ENCODE measurements at regions of chr5 and their contacts with region 1.

Region 1: GRCh38 chr5:111757355-111758283 is 625 bp upstream of the NREP start:
- DNase-seq: peak; percentile 39 to 89 (median 81)
- ATAC-seq: peak; percentile 81
- H3K4me3 ChIP-seq: peak overlapping the region; percentile 59 to 88
- H3K4me3 Mint-ChIP-seq: peak overlapping the region; percentile 90
- H3K27ac ChIP-seq: peak overlapping the region; percentile 51 to 74
- H3K27ac Mint-ChIP-seq: peak overlapping the region; percentile 90
- H3K4me1 ChIP-seq: peaks cover 13% of the 10 kb centered on the region
- H3K4me1 Mint-ChIP-seq: peaks cover 21% of the 10 kb centered on the region
- H3K27me3 ChIP-seq: no peaks in the 10 kb centered on the region
- H3K27me3 Mint-ChIP-seq: no peaks in the 10 kb centered on the region
- CTCF ChIP-seq: no peak

Region 2: GRCh38 chr5:111530298-111530740 is 227.3 kb before region 1 on chr5:
- CTCF ChIA-PET with region 1: interaction called, 4 read pairs
- POLR2A ChIA-PET with region 1: no interaction called
- intact Hi-C with region 1: loop called in 1 of 2 experiments (anchors 5 kb)
- DNase-seq: peak; percentile 63 to 96 (median 83)
- ATAC-seq: peak; percentile 99
- H3K4me3 ChIP-seq: no peak overlapping the region
- H3K4me3 Mint-ChIP-seq: peak overlapping the region; percentile 21
- H3K27ac ChIP-seq: peak overlapping the region; percentile 26 to 81
- H3K27ac Mint-ChIP-seq: peak overlapping the region; percentile 83
- H3K4me1 ChIP-seq: peaks cover 7% of the 10 kb centered on the region
- H3K4me1 Mint-ChIP-seq: peaks cover 12% of the 10 kb centered on the region
- H3K27me3 ChIP-seq: no peaks in the 10 kb centered on the region
- H3K27me3 Mint-ChIP-seq: no peaks in the 10 kb centered on the region
- CTCF ChIP-seq: no peak

Region 3: GRCh38 chr5:111743988-111744387 is 13.6 kb before region 1 on chr5:
- CTCF ChIA-PET with region 1: interaction called, 4 read pairs
- POLR2A ChIA-PET with region 1: no interaction called
- intact Hi-C with region 1: loop called in 1 of 2 experiments (anchors 2 kb)
- DNase-seq: no peak
- ATAC-seq: no peak
- H3K4me3 ChIP-seq: no peak overlapping the region
- H3K4me3 Mint-ChIP-seq: no peak overlapping the region
- H3K27ac ChIP-seq: no peak overlapping the region
- H3K27ac Mint-ChIP-seq: no peak overlapping the region
- H3K4me1 ChIP-seq: peaks cover 8% of the 10 kb centered on the region
- H3K4me1 Mint-ChIP-seq: peaks cover 15% of the 10 kb centered on the region
- H3K27me3 ChIP-seq: peaks cover 0 to 3% of the 10 kb centered on the region in 2 experiments
- H3K27me3 Mint-ChIP-seq: no peaks in the 10 kb centered on the region
- CTCF ChIP-seq: no peak